ENCODE measurements at regions of chr3 and their contacts with region 1.

Region 1: DNA sequence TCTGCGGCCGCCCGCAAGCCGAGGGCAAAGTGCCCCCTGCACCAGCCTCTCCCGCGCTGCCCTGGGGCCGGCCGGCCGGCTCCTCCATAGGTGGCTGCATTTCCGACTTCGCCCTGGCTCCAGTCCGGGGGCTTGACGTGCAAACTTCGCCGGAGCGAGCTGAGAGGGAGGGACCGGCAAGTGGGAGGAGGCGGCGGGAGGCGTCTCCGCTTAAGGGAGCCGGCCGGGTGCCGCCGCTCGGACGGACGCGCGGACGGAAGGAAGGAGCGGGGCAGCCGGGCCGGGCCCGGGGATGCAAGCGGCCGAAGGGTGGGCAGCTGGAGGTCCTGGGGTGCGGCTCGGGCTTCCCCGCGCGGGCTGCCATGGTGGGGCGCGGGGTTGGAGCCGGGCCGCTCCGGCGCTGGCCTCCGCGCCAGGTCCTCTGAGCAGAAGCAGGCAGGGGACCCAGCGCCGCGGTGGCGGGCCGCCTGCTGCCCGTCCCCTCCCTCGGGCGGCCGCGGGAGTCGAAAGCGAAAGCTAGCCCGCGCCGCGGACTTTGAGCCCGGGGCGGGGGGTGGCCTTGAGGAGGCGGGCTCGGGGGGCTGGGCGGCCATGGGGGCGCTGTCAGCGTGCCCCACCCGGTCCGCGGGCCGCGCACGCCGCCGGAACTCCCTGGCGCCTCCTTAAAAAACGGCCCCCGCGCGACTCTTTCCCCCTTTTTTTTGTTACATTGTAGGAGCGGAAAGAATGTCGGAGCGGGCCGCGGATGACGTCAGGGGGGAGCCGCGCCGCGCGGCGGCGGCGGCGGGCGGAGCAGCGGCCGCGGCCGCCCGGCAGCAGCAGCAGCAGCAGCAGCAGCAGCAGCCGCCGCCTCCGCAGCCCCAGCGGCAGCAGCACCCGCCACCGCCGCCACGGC is at the start of gene SCAANT1:
- DNase-seq: peak; percentile 78
- H3K4me3 Mint-ChIP-seq: peak within 1 kb of the TSS; percentile 87
- H3K27ac Mint-ChIP-seq: peak within 1 kb of the TSS; percentile 93
- H3K4me1 Mint-ChIP-seq: peaks cover 38% of the 10 kb centered on the region
- H3K27me3 Mint-ChIP-seq: no peaks in the 10 kb centered on the region
- total RNA-seq, gene SCAANT1: not detected

Region 2: GRCh38 chr3:63032905-63033304 is 879.2 kb before region 1 on chr3:
- CTCF ChIA-PET with region 1: no interaction called
- intact Hi-C with region 1: no loop called
- DNase-seq: no peak
- H3K4me3 Mint-ChIP-seq: no peak overlapping the region
- H3K27ac Mint-ChIP-seq: no peak overlapping the region
- H3K4me1 Mint-ChIP-seq: no peaks in the 10 kb centered on the region
- H3K27me3 Mint-ChIP-seq: no peaks in the 10 kb centered on the region

Region 3: GRCh38 chr3:63251499-63251898 is 660.6 kb before region 1 on chr3:
- CTCF ChIA-PET with region 1: no interaction called
- intact Hi-C with region 1: no loop called
- DNase-seq: no peak
- H3K4me3 Mint-ChIP-seq: no peak overlapping the region
- H3K27ac Mint-ChIP-seq: no peak overlapping the region
- H3K4me1 Mint-ChIP-seq: no peaks in the 10 kb centered on the region
- H3K27me3 Mint-ChIP-seq: peaks cover 4% of the 10 kb centered on the region

Region 4: DNA sequence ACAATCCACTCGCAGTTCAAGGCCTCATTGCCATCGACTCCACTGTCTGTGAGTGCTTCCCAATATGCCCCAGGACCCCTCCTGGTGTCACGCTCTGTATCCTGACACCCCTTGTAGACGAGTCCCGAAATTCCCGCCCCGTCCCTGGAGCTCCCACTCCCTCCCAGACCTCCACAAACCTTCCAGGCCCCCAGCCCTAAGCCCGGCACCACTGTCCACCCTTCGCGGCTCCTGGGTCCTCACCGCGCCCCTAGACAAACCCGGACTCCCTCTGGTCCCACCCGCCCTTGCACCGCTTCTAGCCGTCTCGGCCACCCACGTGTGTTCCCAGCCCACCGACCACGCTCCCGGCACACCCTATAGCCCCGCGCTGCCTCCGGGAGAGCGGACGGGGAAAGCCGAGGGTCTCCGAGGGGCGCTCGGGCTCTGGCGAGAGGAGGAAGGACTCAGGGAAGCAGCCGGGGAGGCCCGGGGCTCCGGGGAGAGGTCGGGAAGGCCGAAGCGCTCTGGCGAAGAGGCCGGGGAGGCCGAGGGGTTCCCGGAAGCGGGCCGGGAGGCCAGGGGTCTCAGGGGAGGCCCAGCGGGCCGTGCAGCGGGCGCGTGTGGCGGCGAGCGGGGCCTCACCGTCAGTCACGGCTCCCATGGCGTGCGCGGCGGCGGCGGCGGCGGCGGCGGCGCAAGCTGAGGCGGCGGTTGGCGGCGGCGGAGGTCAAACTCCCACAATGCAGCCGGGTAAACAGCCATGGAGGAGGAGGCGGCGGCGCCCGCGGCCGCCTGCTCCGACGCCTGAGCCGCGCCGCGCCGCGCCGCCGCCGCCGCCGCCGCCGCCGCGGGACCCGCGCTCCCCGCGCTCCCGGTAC is 48.7 kb before region 1 on chr3 and contains the starts of genes ATXN7 and THOC7:
- CTCF ChIA-PET with region 1: no interaction called
- intact Hi-C with region 1: loop called (anchors 1 kb)
- DNase-seq: peak; percentile 56
- H3K4me3 Mint-ChIP-seq: peak within 1 kb of the TSS; percentile 93
- H3K27ac Mint-ChIP-seq: peak within 1 kb of the TSS; percentile 92
- H3K4me1 Mint-ChIP-seq: peaks cover 58% of the 10 kb centered on the region
- H3K27me3 Mint-ChIP-seq: no peaks in the 10 kb centered on the region
- total RNA-seq, gene ATXN7: 25.5 to 25.8 TPM
- total RNA-seq, gene THOC7: 72.8 to 77.0 TPM

Region 5: GRCh38 chr3:63877737-63878393 is 34.3 kb before region 1 on chr3:
- CTCF ChIA-PET with region 1: no interaction called
- intact Hi-C with region 1: no loop called
- DNase-seq: no peak
- H3K4me3 Mint-ChIP-seq: no peak overlapping the region
- H3K27ac Mint-ChIP-seq: peak overlapping the region; percentile 22
- H3K4me1 Mint-ChIP-seq: peaks cover 57% of the 10 kb centered on the region
- H3K27me3 Mint-ChIP-seq: no peaks in the 10 kb centered on the region

Region 6: GRCh38 chr3:64143409-64144130 is 231.4 kb after region 1 on chr3:
- CTCF ChIA-PET with region 1: no interaction called
- intact Hi-C with region 1: no loop called
- DNase-seq: no peak
- H3K4me3 Mint-ChIP-seq: no peak overlapping the region
- H3K27ac Mint-ChIP-seq: no peak overlapping the region
- H3K4me1 Mint-ChIP-seq: no peaks in the 10 kb centered on the region
- H3K27me3 Mint-ChIP-seq: peaks cover 4% of the 10 kb centered on the region

Measured in activated naive CD4-positive, alpha-beta T cell treated with anti-CD3 and anti-CD28 coated beads for 36 hours (primary cell).